ENCODE measurements at regions of chr14 and their contacts with region 1.

Region 1: GRCh38 chr14:102215071-102215470 is 75.4 kb downstream of the WDR20 start:
- DNase-seq: peak; percentile 76
- H3K4me3 ChIP-seq: no peak overlapping the region
- H3K27ac ChIP-seq: peak overlapping the region; percentile 29 to 56 (median 30)
- H3K4me1 ChIP-seq: peaks cover 0 to 25% (median 20%) of the 10 kb centered on the region in 4 donors
- H3K27me3 ChIP-seq: no peaks in the 10 kb centered on the region
- CTCF ChIP-seq: no peak
- EP300 ChIP-seq: no peak
- POLR2A ChIP-seq: no peak

Region 2: DNA sequence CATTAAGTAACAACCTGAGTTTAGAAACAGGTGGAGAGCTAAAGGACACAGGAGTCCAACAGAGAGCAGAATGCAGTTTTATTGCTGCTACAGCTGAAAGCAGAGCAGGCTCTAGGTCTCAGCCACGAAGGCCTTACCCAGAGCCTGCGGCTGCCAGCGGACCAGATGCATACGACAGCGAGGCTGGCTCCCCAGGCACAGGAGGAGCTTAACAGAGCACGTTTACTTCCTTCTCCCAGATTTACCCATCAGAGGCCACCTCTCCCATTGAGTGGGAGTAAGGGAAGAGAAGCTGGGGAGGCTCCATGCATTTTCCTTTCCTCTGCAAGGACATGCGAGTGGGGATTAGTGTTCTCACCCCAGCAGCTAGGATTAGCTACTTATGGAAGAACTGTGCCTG is 228.1 kb before region 1 on chr14:
- intact Hi-C with region 1: loop called (anchors 5 kb)
- DNase-seq: no peak
- H3K4me3 ChIP-seq: no peak overlapping the region
- H3K27ac ChIP-seq: peak overlapping the region in 1 of 4 donors; percentile 53
- H3K4me1 ChIP-seq: peaks cover 0 to 8% (median 4%) of the 10 kb centered on the region in 4 donors
- H3K27me3 ChIP-seq: no peaks in the 10 kb centered on the region
- CTCF ChIP-seq: no peak
- EP300 ChIP-seq: no peak
- POLR2A ChIP-seq: no peak

Region 3: GRCh38 chr14:102139248-102140026 is 75.6 kb before region 1 on chr14 and contains the start of gene WDR20:
- intact Hi-C with region 1: loop called (anchors 5 kb)
- DNase-seq: peak; percentile 98
- H3K4me3 ChIP-seq: peak within 1 kb of the TSS; percentile 70 to 97 (median 96)
- H3K27ac ChIP-seq: peak within 1 kb of the TSS; percentile 77 to 86 (median 85)
- H3K4me1 ChIP-seq: peaks cover 0 to 31% (median 21%) of the 10 kb centered on the region in 4 donors
- H3K27me3 ChIP-seq: no peaks in the 10 kb centered on the region
- CTCF ChIP-seq: no peak
- EP300 ChIP-seq: peak in 1 of 4 donors; percentile 17
- POLR2A ChIP-seq: peak in 1 of 2 donors; percentile 40
- total RNA-seq, gene WDR20: 19.1 to 32.1 (median 27.3) TPM

Region 4: DNA sequence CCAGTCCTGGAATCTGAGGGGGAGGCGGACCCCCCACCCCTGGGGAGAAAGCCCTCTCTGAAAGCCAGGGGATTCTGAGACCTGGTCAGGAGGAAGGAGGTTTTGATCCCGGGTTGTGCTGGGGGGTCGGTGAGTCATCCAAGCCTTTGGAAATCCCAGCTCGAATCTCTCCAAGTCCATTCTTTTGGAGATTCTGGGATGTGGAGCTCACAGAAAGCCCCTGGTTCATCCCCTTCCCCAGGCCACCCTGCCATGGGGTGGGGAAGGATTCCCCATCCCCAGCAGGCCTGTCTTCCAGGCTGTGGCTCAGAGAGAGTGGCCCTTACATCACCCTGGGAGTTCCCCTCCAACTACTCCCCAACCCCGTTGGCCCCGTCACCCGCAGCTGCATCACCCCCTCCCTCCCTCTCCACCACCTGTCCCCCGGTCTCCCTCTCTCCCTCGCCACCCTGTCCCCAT is 893.7 kb after region 1 on chr14:
- intact Hi-C with region 1: no loop called
- DNase-seq: no peak
- H3K4me3 ChIP-seq: no peak overlapping the region
- H3K27ac ChIP-seq: peak overlapping the region in 3 of 4 donors; percentile 14 to 31 (median 20)
- H3K4me1 ChIP-seq: peaks cover 0 to 41% (median 34%) of the 10 kb centered on the region in 4 donors
- H3K27me3 ChIP-seq: peaks cover 11 to 37% (median 11%) of the 10 kb centered on the region in 3 donors
- CTCF ChIP-seq: no peak
- EP300 ChIP-seq: no peak
- POLR2A ChIP-seq: no peak